CD4-positive, alpha-beta T cell (primary cell): ENCODE measurements at regions of chr20 and their contacts with region 1.

Region 1: DNA sequence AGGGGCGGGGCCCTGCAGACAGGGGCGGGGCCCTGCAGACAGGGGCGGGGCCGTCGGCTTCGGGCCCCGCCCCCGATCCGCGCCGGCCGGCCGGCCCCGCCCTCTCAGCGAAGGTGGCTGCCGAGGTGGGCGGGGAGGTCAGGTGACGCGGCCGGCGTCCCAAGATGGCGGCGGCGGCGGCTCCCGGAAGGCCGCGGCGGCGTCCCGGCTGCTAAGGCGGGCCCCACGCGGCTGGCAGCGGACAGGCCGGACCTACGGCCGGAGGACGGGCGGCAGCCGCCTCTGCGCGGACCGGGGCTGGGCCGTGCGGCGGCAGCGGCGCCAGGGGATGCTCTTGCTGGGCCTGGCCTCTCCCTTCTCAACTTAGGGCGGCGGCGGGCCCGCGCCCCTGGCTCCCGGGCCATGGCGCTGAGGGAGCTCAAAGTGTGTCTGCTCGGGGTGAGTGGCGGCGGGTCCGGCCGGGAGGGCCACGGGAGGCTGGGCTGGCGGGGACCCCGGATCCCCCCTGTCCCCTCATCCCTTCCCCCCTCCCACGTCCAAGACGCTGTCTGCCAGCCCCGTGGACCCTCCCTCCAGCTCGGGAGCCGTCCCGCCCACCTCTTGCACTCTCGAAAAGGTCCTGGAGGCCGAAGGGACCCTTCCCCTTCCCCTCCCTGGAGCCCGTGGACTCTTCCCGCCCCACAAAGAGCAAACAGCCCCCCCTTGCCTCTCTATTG is at the start of gene RAB22A:
- DNase-seq: peak; percentile 62 to 95 (median 80)
- ATAC-seq: peak; percentile 34
- H3K4me3 ChIP-seq: peak within 1 kb of the TSS; percentile 77
- H3K4me3 Mint-ChIP-seq: peak within 1 kb of the TSS; percentile 97
- H3K27ac ChIP-seq: peak within 1 kb of the TSS; percentile 88 to 89
- H3K27ac Mint-ChIP-seq: peak within 1 kb of the TSS; percentile 98
- H3K4me1 ChIP-seq: peaks cover 58% of the 10 kb centered on the region
- H3K4me1 Mint-ChIP-seq: peaks cover 64% of the 10 kb centered on the region
- H3K27me3 ChIP-seq: no peaks in the 10 kb centered on the region
- H3K27me3 Mint-ChIP-seq: no peaks in the 10 kb centered on the region
- CTCF ChIP-seq: no peak
- total RNA-seq, gene RAB22A: 16.5 to 17.2 TPM

Region 2: GRCh38 chr20:57351042-57351783 is 958.5 kb before region 1 on chr20 and contains the start of gene RAE1:
- CTCF ChIA-PET with region 1: no interaction called
- POLR2A ChIA-PET with region 1: no interaction called
- intact Hi-C with region 1: loop called in 1 of 2 experiments (anchors 10 kb)
- DNase-seq: peak; percentile 82 to 97 (median 89)
- ATAC-seq: peak; percentile 82
- H3K4me3 ChIP-seq: peak within 1 kb of the TSS; percentile 98
- H3K4me3 Mint-ChIP-seq: peak within 1 kb of the TSS; percentile 94
- H3K27ac ChIP-seq: peak within 1 kb of the TSS; percentile 73 to 74
- H3K27ac Mint-ChIP-seq: peak within 1 kb of the TSS; percentile 89
- H3K4me1 ChIP-seq: peaks cover 21% of the 10 kb centered on the region
- H3K4me1 Mint-ChIP-seq: peaks cover 55% of the 10 kb centered on the region
- H3K27me3 ChIP-seq: no peaks in the 10 kb centered on the region
- H3K27me3 Mint-ChIP-seq: no peaks in the 10 kb centered on the region
- CTCF ChIP-seq: no peak
- total RNA-seq, gene RAE1: 58.8 to 60.7 TPM

Region 3: GRCh38 chr20:58271606-58272402 is 37.9 kb before region 1 on chr20:
- CTCF ChIA-PET with region 1: interaction called, 6 read pairs
- POLR2A ChIA-PET with region 1: no interaction called
- intact Hi-C with region 1: loop called in 1 of 2 experiments (anchors 5 kb)
- DNase-seq: no peak
- ATAC-seq: no peak
- H3K4me3 ChIP-seq: no peak overlapping the region
- H3K4me3 Mint-ChIP-seq: no peak overlapping the region
- H3K27ac ChIP-seq: no peak overlapping the region
- H3K27ac Mint-ChIP-seq: no peak overlapping the region
- H3K4me1 ChIP-seq: peaks cover 10% of the 10 kb centered on the region
- H3K4me1 Mint-ChIP-seq: peaks cover 30% of the 10 kb centered on the region
- H3K27me3 ChIP-seq: no peaks in the 10 kb centered on the region
- H3K27me3 Mint-ChIP-seq: no peaks in the 10 kb centered on the region
- CTCF ChIP-seq: no peak

Region 4: DNA sequence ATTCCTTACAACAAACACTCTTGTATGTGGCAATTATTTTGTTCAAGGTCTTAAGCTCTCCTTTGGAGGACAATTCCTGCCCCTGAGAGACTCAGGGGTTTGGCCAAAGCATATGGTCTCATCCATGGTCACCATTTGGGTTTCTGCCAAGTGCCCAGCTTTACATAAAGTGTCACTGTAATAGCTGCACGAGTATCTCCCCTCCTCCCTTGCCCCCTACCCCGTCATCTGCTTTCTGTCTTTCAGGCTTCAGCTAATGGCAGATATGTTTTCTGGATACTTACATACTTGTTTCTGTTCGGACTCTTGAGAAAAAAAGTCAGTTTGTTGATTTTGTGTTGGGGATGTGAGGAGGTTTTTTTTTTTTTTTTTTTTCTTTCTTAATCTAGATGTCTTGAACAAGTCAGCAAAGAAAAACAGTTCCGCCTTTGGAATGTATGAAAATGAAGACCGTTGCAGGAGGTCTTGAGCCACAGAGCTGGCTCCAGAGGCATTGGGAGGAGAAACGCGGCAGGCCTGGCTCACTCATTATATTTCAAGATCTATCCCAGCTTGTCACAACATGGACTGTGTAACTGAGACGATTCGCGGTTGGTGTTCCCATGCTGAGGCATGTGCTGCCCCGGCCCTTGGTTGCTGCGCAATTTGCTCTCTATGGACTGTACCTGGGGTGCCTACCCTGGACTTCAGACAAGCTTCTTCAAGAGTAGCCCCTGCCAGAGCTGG is 308.8 kb after region 1 on chr20:
- CTCF ChIA-PET with region 1: no interaction called
- POLR2A ChIA-PET with region 1: no interaction called
- intact Hi-C with region 1: no loop called
- DNase-seq: no peak
- ATAC-seq: no peak
- H3K4me3 ChIP-seq: no peak overlapping the region
- H3K4me3 Mint-ChIP-seq: no peak overlapping the region
- H3K27ac ChIP-seq: no peak overlapping the region
- H3K27ac Mint-ChIP-seq: no peak overlapping the region
- H3K4me1 ChIP-seq: no peaks in the 10 kb centered on the region
- H3K4me1 Mint-ChIP-seq: no peaks in the 10 kb centered on the region
- H3K27me3 ChIP-seq: peaks cover 3 to 12% of the 10 kb centered on the region in 2 experiments
- H3K27me3 Mint-ChIP-seq: peaks cover 26% of the 10 kb centered on the region
- CTCF ChIP-seq: no peak

Region 5: DNA sequence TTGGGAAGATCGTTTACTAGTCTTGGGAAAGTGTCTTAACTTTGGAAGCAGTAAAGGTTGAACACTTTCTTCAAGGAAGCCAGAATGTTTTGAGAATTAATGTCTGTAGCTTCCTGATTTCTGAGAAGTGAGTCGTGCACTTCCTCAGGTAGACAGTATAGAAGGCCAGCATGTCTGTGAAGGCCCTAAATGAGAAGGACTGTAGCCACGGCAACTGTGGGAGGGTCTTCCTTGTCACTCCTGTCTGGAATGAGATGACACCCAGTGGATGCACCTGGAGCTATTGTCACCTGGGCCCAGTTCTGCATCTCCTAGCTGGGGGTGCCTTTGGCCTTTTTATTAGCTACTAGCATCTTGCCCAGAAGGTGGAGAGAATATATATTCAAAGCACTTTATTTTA is 350.1 kb after region 1 on chr20:
- CTCF ChIA-PET with region 1: no interaction called
- POLR2A ChIA-PET with region 1: no interaction called
- intact Hi-C with region 1: loop called in 1 of 2 experiments (anchors 2 kb)
- DNase-seq: peak in 5 of 14 experiments; percentile 13 to 40 (median 35)
- ATAC-seq: no peak
- H3K4me3 ChIP-seq: peak overlapping the region; percentile 34
- H3K4me3 Mint-ChIP-seq: peak overlapping the region; percentile 82
- H3K27ac ChIP-seq: peak overlapping the region; percentile 89 to 92
- H3K27ac Mint-ChIP-seq: peak overlapping the region; percentile 98
- H3K4me1 ChIP-seq: peaks cover 55% of the 10 kb centered on the region
- H3K4me1 Mint-ChIP-seq: peaks cover 90% of the 10 kb centered on the region
- H3K27me3 ChIP-seq: no peaks in the 10 kb centered on the region
- H3K27me3 Mint-ChIP-seq: no peaks in the 10 kb centered on the region
- CTCF ChIP-seq: no peak

Region 6: GRCh38 chr20:58980700-58981627 is 671.2 kb after region 1 on chr20 and contains the start of gene NELFCD:
- CTCF ChIA-PET with region 1: no interaction called
- POLR2A ChIA-PET with region 1: no interaction called
- intact Hi-C with region 1: loop called in 1 of 2 experiments (anchors 10 kb)
- DNase-seq: peak; percentile 79 to 95 (median 88)
- ATAC-seq: peak; percentile 92
- H3K4me3 ChIP-seq: peak within 1 kb of the TSS; percentile 82
- H3K4me3 Mint-ChIP-seq: peak within 1 kb of the TSS; percentile 92
- H3K27ac ChIP-seq: peak within 1 kb of the TSS; percentile 41 to 52
- H3K27ac Mint-ChIP-seq: peak within 1 kb of the TSS; percentile 87
- H3K4me1 ChIP-seq: peaks cover 42% of the 10 kb centered on the region
- H3K4me1 Mint-ChIP-seq: peaks cover 43% of the 10 kb centered on the region
- H3K27me3 ChIP-seq: no peaks in the 10 kb centered on the region
- H3K27me3 Mint-ChIP-seq: no peaks in the 10 kb centered on the region
- CTCF ChIP-seq: no peak
- total RNA-seq, gene NELFCD: 95.7 to 97.0 TPM